Activated T-helper 2 cell treated with anti-CD3 and anti-CD28 coated beads, Interferon-gamma antibody, Interleukin-2, Interleukin-4, amounts not matched to agents 10 μg/mL and 5 μg/mL and 100 μg/mL, durations not matched to agents 14 hours and 24 hours and 36 hours (primary cell): ENCODE measurements at regions of chr1 and their contacts with region 1.

Region 1: DNA sequence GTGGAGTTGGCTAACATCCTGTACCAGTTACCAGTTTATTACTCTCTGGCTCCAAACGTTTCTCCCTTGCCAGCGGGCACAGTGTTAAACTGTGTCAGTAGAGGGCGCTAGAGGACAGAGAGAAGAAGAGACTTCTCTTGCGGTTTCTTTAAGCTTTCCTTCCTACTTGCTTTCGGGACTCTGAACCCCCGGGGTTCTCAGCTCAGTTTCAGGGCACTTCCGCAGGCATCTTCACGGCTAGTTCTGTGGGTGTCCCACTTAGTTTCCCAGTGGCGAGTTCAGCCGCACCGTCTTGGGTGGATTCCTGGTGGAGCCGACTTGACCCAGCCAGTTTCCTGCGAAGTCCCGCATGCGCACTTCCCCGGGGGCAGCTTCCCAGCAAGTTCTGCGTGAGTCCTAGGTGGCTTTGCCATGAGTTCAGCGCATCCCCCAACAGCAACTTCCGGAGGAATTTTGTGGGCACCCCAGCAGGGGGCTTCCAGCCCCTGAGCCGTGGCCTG is 37.9 kb upstream of the BTG2 start:
- DNase-seq: peak; percentile 76
- H3K4me3 Mint-ChIP-seq: peak overlapping the region; percentile 83
- H3K27ac Mint-ChIP-seq: peak overlapping the region; percentile 59
- H3K4me1 Mint-ChIP-seq: peaks cover 16% of the 10 kb centered on the region
- H3K27me3 Mint-ChIP-seq: peaks cover 2% of the 10 kb centered on the region

Region 2: DNA sequence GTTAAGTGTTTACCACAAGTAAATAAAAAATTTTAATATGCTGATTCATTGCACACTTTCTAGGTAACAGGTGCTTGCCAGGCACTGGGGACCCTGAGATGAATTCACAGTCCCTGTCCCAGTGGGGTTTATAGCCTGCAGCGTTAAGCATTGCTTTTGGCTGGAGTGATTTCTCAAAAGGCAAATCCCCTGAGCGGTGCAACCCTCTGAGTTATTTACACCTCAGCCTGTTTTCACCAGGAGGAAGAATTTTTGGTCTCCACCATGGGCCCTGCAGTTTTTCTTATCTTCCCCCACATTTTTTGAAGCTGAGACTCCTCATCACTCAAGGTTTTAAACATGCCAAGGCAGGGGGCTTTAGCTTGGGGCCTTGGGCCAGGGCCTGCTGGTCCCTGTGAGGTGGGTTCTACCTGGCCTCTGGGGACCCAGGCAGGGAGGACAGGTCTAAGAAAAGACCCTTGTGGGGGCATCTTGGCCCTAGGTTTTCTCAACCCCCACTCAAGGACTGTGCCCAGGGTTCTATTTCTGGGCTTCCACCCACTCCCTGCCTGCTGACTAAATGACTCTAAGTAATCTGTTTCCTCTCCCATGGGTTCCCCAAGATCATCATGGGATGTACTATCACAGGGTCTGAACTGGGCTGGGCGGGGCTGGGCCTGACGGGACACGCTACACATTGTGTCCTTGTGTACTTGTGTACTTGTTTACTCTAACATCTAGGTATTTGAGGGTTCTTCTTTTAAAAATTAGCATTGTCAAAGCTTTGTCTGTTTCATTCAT is 27.7 kb before region 1 on chr1:
- intact Hi-C with region 1: no loop called
- DNase-seq: no peak
- H3K4me3 Mint-ChIP-seq: no peak overlapping the region
- H3K27ac Mint-ChIP-seq: no peak overlapping the region
- H3K4me1 Mint-ChIP-seq: no peaks in the 10 kb centered on the region
- H3K27me3 Mint-ChIP-seq: peaks cover 26% of the 10 kb centered on the region

Region 3: DNA sequence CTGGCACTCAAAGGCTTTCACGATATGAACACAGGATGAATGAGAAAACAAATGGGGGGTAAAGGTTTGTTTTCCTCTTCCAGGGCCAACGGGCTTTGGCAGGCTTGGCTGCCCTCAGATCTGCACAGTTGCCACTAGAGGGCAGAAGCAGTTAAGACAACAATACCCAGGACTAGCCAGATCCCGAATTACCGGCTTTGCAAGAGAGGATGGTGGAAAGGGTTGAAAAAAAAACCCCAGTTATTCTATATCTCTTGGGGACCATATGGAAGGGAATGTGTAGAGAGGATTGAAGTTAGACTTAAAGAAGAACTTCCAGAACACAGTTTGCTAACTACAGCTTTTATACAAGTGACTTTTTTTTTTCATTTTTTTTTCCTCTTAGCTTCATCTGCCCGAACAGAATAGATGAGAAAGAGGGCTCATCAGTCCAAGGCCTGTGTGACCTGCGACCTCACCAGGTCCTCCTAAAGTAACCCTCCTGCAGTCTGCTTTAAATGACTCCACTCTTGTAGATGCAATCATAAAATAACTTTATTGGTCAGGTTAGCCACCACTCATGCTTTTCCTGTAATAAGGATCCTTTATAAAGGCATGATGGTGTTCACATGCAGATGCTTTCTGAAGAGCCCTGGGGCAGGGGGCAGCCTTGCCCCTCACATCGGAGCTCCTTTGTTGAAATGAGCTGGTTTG is 72.9 kb after region 1 on chr1:
- intact Hi-C with region 1: loop called (anchors 1 kb)
- DNase-seq: peak; percentile 43
- H3K4me3 Mint-ChIP-seq: no peak overlapping the region
- H3K27ac Mint-ChIP-seq: no peak overlapping the region
- H3K4me1 Mint-ChIP-seq: peaks cover 7% of the 10 kb centered on the region
- H3K27me3 Mint-ChIP-seq: peaks cover 27% of the 10 kb centered on the region

Region 4: DNA sequence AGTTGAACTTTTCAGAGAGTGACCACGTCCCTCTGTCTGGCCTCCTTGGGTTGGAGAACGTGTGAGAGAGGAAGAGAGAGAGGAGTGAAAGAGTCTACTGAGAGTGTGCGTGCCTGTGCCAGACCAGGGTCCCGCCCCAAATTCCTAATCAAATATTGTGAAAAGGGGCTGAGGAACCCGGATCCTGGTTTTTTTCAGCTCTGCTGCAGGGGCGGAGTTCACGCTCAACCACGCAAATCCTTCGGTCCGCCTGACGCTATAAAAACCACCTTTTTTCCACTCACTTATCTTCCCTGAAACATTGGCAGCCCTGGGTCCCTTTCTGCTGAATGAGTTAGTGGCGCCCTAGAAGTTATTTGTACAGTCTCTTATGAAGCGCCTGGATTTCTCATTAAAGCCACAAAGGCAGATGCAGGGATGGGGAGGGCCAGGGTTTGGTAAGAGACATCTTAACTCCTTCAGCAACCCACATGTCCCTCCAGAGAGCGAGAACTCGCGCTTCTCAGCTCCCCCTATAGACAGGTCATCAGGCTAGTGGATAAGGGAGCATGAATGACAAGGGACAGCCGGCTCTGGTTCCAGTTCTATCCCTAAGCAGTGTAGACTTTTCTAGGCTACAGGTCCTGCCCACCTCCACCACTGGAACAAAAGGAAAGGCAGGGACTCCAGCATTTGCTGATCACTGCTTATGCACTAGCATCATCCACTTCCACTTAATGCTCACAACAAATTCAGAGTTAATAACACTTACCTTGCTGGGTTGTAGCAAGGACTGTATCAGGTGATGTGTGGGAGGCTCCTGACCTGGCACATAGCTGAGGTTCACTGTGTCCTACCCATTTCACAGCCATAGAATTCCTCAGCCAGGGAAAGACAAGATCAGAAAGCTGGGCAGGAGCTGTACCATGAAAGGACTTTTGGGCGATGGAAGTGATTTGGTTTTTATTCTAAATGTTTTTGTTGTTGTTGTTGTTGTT is 83.9 kb after region 1 on chr1 and contains the start of gene FMOD:
- intact Hi-C with region 1: no loop called
- DNase-seq: no peak
- H3K4me3 Mint-ChIP-seq: peak within 1 kb of the TSS; percentile 35
- H3K27ac Mint-ChIP-seq: peak within 1 kb of the TSS; percentile 2
- H3K4me1 Mint-ChIP-seq: peaks cover 5% of the 10 kb centered on the region
- H3K27me3 Mint-ChIP-seq: peaks cover 25% of the 10 kb centered on the region
- total RNA-seq, gene FMOD: 4.0 and 5.4 TPM in 2 replicates

Region 5: GRCh38 chr1:203448521-203449061 is 181.2 kb after region 1 on chr1:
- intact Hi-C with region 1: no loop called
- DNase-seq: no peak
- H3K4me3 Mint-ChIP-seq: no peak overlapping the region
- H3K27ac Mint-ChIP-seq: no peak overlapping the region
- H3K4me1 Mint-ChIP-seq: no peaks in the 10 kb centered on the region
- H3K27me3 Mint-ChIP-seq: peaks cover 28% of the 10 kb centered on the region